RWPE1 (cell line): ENCODE measurements at regions of chr3 and their contacts with region 1.

Region 1: GRCh38 chr3:138923531-138923994 is 23.4 kb downstream of the FOXL2 start:
- DNase-seq: peak; percentile 59
- H3K27ac ChIP-seq: no peak overlapping the region
- CTCF ChIP-seq: peak; percentile 81

Region 2: GRCh38 chr3:138417559-138417982 is 506.0 kb before region 1 on chr3:
- CTCF ChIA-PET with region 1: interaction called, 11 read pairs
- POLR2A ChIA-PET with region 1: no interaction called
- DNase-seq: peak; percentile 80
- H3K27ac ChIP-seq: no peak overlapping the region
- CTCF ChIP-seq: peak; percentile 91

Region 3: DNA sequence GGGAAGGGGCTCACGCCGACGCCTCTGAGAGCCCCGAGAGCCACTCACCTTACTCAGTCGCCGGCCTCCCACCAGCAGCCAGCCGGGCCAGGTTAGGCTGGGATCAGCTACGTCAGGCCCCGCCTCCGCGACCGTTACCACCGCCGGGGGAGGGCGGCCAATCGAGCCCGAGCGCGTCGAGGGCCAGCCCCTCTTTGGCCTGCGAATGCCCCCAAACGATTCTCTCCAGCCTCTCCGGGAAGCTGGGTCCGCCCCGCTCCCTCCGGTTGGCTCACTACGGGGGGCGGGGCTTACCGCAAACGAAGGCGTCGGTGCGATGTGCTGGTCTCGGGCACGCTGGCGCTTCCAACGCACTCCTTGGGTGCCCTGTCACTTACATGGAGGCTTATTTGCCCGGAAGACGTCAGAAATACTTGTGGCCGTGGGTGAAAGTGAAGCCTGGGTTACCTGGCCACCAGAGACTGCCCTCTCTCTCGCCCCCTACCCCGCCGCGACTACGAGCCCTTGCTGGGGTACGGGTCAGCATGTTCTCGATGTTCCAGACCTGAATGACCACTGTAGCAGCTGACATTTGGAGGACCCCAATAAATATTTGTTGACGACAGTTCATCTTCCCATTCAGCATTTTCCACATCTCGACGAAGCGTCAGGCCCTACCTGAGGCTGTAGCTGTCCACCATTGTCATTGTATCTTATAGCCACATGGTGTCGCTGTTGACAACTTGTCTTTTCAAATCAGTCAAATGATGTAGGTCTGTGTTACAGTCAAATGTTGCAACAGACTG is 329.2 kb before region 1 on chr3 and contains the start of gene CEP70:
- CTCF ChIA-PET with region 1: interaction called, 18 read pairs
- POLR2A ChIA-PET with region 1: interaction called, 5 read pairs
- DNase-seq: peak; percentile 91
- H3K27ac ChIP-seq: peak within 1 kb of the TSS; percentile 90
- CTCF ChIP-seq: peak; percentile 83

Region 4: DNA sequence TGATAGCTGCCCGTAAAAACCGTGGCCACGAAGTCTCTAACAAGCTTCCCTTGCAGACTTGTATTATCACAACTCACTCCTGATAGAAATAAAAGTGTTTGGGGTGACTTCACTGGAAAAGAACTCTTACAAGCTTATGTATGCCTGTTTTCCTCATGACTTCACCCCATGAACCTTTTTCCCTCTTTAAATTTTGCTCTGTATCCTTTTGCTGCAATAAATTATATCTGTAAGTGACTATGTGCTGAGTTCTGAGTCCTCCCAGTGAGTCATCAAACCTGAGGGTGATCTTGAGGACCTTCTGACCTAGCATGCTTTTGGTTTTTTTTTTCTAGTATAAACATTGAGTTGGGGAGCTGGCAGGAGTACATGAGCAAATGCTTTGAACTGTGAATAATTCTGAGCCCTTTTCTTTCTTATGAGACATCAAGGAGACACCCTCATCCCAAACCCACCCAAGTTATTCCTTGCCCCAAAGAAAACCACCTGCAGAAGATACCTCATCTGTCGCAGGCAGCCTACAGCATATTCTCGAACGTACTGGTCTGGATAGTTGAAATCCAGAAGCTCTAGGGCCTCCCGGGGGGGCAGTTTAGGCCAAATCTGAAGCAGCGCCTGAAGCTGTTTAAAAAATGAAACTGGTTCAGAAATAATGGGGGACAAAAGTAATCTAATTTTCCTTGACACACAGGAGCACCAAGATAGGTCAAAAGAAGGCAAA is 229.1 kb before region 1 on chr3:
- CTCF ChIA-PET with region 1: interaction called, 15 read pairs
- POLR2A ChIA-PET with region 1: no interaction called
- DNase-seq: peak; percentile 50
- H3K27ac ChIP-seq: no peak overlapping the region
- CTCF ChIP-seq: no peak

Region 5: DNA sequence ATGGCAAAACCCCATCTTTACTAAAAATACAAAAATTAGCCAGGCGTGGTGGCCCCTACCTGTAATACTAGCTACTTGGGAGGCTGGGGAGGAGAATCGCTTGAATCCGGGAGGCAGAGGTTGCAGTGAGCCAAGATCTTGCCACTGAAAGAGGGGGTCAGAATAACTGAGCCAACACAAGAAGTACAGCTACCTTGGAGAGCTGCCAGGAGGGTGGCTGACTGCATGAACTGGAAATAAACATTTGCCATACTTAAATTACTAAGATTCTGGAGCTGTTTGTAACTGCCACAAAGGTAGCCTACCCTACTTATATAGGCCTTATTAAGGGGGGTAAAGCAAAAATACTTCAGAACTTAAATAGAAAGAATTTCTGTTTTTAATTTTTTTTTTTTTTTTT is 73.4 kb before region 1 on chr3:
- CTCF ChIA-PET with region 1: interaction called, 11 read pairs
- POLR2A ChIA-PET with region 1: no interaction called
- DNase-seq: no peak
- H3K27ac ChIP-seq: no peak overlapping the region
- CTCF ChIP-seq: no peak

Region 6: DNA sequence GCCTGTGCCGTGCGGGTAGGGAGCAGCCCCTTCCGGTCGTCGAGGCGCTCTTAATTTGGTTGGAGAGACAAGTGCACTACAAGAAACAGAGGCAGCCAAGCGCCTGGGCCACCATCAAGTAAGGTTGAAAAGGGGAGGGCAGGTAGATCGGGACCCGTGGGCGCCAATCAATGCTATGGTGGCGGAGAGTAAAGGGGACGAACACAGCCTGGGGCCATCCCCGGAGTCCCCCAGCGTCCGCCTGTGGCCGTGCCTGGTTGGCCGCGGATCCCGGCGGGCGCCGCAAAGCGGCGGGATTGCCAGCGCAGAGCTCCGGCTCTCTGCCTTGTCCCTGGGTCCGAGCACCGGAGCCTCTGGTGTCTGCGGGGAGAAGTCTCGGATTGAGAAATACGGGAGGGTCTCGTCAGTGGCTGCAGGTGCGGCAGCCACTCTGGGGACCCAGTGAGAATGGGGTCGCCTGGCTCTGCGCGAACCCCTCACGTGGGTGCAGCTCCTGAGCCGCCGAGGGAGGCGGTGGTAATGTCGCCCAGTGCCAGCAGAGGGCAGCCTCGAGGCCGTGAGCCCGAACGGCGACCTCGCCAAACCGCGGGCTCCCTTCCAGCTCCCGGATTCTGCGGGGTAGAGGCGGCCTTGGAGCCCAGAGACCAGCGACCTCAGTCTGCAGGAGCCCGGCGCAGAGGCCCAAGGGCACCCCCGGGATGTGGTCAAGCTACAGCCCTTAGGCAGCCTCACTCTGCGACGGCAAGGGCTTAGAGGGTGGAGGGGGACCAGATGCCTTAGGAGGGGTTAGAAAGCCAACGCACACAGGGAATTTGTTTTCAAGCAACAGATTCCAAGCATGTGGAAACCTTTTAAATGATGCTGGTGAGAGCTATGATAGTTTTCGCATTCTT is 12.5 kb after region 1 on chr3:
- CTCF ChIA-PET with region 1: interaction called, 25 read pairs
- POLR2A ChIA-PET with region 1: no interaction called
- DNase-seq: peak; percentile 75
- H3K27ac ChIP-seq: no peak overlapping the region
- CTCF ChIP-seq: peak; percentile 86

Region 7: GRCh38 chr3:138984816-138985215 is 61.3 kb after region 1 on chr3:
- CTCF ChIA-PET with region 1: no interaction called
- POLR2A ChIA-PET with region 1: no interaction called
- DNase-seq: no peak
- H3K27ac ChIP-seq: no peak overlapping the region
- CTCF ChIP-seq: no peak